IMR-90 (cell line): ENCODE measurements at regions of chr20 and their contacts with region 1.

Region 1: GRCh38 chr20:48012197-48013085 is 227.2 kb upstream of the SULF2 start:
- DNase-seq: peak; percentile 45
- ATAC-seq: no peak
- H3K4me3 ChIP-seq: no peak overlapping the region
- H3K27ac ChIP-seq: peak overlapping the region; percentile 31; the same call in 1 of the 2 replicates
- H3K4me1 ChIP-seq: peaks cover 12% of the 10 kb centered on the region; the same call in 1 of the 2 replicates
- H3K27me3 ChIP-seq: no peaks in the 10 kb centered on the region
- CTCF ChIP-seq: no peak
- POLR2A ChIP-seq: no peak
- RAD21 ChIP-seq: no peak

Region 2: DNA sequence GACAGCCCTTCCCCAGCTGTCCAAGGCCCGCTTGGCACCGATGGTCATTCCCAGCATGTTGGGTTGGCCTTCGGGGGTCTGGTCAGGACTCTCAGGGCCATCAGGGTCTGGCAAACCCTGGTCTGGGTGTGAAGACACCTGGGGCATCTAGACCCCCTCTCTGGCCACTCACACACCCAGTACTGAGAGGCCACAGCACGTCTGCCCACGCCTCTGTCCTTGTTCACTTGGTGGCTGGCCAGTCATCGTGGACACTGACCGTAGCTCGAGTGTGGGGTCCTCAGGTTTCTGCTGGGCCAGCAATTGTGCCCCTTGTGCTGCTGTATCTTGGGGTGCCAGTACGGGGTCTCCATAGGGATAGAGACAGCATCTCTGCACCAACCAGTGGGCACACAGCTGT is 173.2 kb before region 1 on chr20:
- CTCF ChIA-PET with region 1: no interaction called
- POLR2A ChIA-PET with region 1: no interaction called
- dilution Hi-C with region 1: no loop called
- in situ Hi-C with region 1: no loop called
- intact Hi-C with region 1: no loop called
- DNase-seq: no peak
- ATAC-seq: no peak
- H3K4me3 ChIP-seq: no peak overlapping the region
- H3K27ac ChIP-seq: no peak overlapping the region
- H3K4me1 ChIP-seq: no peaks in the 10 kb centered on the region
- H3K27me3 ChIP-seq: peaks cover 4% of the 10 kb centered on the region
- CTCF ChIP-seq: no peak
- POLR2A ChIP-seq: no peak
- RAD21 ChIP-seq: no peak

Region 3: GRCh38 chr20:48102914-48103597 is 90.6 kb after region 1 on chr20:
- CTCF ChIA-PET with region 1: no interaction called
- POLR2A ChIA-PET with region 1: no interaction called
- dilution Hi-C with region 1: no loop called
- in situ Hi-C with region 1: loop called (anchors 25 kb)
- intact Hi-C with region 1: no loop called
- DNase-seq: no peak
- ATAC-seq: no peak
- H3K4me3 ChIP-seq: no peak overlapping the region
- H3K27ac ChIP-seq: no peak overlapping the region
- H3K4me1 ChIP-seq: no peaks in the 10 kb centered on the region
- H3K27me3 ChIP-seq: no peaks in the 10 kb centered on the region; the same call in 1 of the 2 replicates
- CTCF ChIP-seq: no peak
- POLR2A ChIP-seq: no peak
- RAD21 ChIP-seq: no peak